ENCODE measurements at regions of chr3 and their contacts with region 1.

Region 1: GRCh38 chr3:21484057-21484827 is 266.8 kb downstream of the ZNF385D start:
- DNase-seq: peak; percentile 59 to 72
- H3K4me3 ChIP-seq: no peak overlapping the region
- H3K27ac ChIP-seq: no peak overlapping the region
- H3K4me1 ChIP-seq: no peaks in the 10 kb centered on the region
- H3K27me3 ChIP-seq: no peaks in the 10 kb centered on the region
- CTCF ChIP-seq: peak in 4 of 6 experiments; percentile 9 to 68 (median 62)
- POLR2A ChIP-seq: no peak

Region 2: GRCh38 chr3:20503394-20504082 is 980.7 kb before region 1 on chr3:
- intact Hi-C with region 1: loop called (anchors 10 kb)
- DNase-seq: no peak
- H3K4me3 ChIP-seq: no peak overlapping the region
- H3K27ac ChIP-seq: no peak overlapping the region
- H3K4me1 ChIP-seq: no peaks in the 10 kb centered on the region
- H3K27me3 ChIP-seq: no peaks in the 10 kb centered on the region
- CTCF ChIP-seq: no peak
- POLR2A ChIP-seq: no peak

Region 3: GRCh38 chr3:21433751-21434150 is 50.5 kb before region 1 on chr3:
- intact Hi-C with region 1: no loop called
- DNase-seq: no peak
- H3K4me3 ChIP-seq: no peak overlapping the region
- H3K27ac ChIP-seq: no peak overlapping the region
- H3K4me1 ChIP-seq: no peaks in the 10 kb centered on the region
- H3K27me3 ChIP-seq: no peaks in the 10 kb centered on the region
- CTCF ChIP-seq: no peak
- POLR2A ChIP-seq: no peak